ENCODE measurements at regions of chr22 and their contacts with region 1.

Region 1: GRCh38 chr22:31561238-31561887 is 65.0 kb downstream of the SFI1 start:
- DNase-seq: peak; percentile 60 to 89
- H3K4me3 ChIP-seq: no peak overlapping the region
- H3K27ac ChIP-seq: no peak overlapping the region
- H3K4me1 ChIP-seq: no peaks in the 10 kb centered on the region
- H3K27me3 ChIP-seq: no peaks in the 10 kb centered on the region
- CTCF ChIP-seq: peak; percentile 84 to 97 (median 96)
- EP300 ChIP-seq: no peak
- POLR2A ChIP-seq: no peak
- RAD21 ChIP-seq: peak; percentile 82 to 89

Region 2: DNA sequence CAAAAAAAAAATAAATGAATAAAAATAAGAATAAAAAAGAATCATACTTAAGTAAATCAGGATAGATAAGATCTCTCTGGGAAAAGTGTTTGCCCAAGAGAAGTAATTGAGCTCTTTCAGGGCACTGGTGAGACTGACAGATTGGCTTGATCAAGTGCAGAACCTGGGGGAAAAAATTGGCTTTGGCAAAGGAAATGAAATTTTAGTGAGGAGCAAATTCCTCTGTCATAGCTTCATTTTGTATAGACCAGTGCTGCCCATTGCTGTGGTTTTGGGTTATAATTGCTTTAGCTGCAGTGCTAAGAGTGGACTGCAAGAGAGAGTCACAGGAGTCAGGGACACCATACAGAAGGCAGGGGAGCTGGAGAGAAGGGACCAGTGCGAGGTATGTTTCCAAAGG is 29.3 kb before region 1 on chr22:
- CTCF ChIA-PET with region 1: interaction called, 13 read pairs
- POLR2A ChIA-PET with region 1: no interaction called
- DNase-seq: no peak
- H3K4me3 ChIP-seq: no peak overlapping the region
- H3K27ac ChIP-seq: no peak overlapping the region
- H3K4me1 ChIP-seq: no peaks in the 10 kb centered on the region
- H3K27me3 ChIP-seq: no peaks in the 10 kb centered on the region
- CTCF ChIP-seq: no peak
- EP300 ChIP-seq: no peak
- POLR2A ChIP-seq: no peak
- RAD21 ChIP-seq: no peak

Region 3: GRCh38 chr22:31544481-31545480 is 16.6 kb before region 1 on chr22:
- CTCF ChIA-PET with region 1: interaction called, 28 read pairs
- POLR2A ChIA-PET with region 1: interaction called, 3 read pairs
- DNase-seq: no peak
- H3K4me3 ChIP-seq: no peak overlapping the region
- H3K27ac ChIP-seq: no peak overlapping the region
- H3K4me1 ChIP-seq: no peaks in the 10 kb centered on the region
- H3K27me3 ChIP-seq: no peaks in the 10 kb centered on the region
- CTCF ChIP-seq: no peak
- EP300 ChIP-seq: no peak
- POLR2A ChIP-seq: no peak
- RAD21 ChIP-seq: no peak

Region 4: DNA sequence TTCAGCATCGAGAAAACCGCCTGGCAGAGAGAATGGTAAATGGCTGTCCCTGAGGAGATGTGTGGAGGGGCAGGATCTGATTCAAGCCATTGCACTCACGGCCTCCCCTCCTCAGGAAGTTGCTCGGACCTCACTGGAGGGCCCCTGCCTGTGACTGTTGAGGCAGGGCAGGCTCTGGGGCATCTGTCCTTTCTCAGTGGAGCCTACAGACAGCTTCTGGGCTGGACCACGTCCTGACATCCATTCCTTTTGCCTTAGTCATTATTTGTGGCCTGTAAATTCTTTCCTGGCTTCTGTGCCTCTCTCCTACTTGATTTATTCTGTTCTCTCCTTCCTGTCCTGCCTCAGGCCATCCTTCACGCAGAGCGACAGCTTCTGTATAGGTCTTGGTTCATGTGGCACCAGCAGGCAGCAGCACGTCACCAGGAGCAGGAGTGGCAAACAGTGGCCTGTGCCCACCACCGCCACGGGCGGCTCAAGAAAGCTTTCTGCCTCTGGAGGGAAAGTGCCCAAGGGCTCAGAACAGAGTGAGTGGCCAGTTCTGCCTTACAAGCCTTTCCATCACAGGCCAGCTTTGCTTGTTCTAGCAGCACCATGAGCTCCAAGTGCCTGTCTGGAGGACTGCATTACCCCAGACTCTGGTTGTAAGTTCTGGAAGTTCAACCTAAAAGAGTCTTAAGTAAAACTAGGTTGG is 41.0 kb after region 1 on chr22:
- CTCF ChIA-PET with region 1: interaction called, 19 read pairs
- POLR2A ChIA-PET with region 1: no interaction called
- DNase-seq: no peak
- H3K4me3 ChIP-seq: no peak overlapping the region
- H3K27ac ChIP-seq: no peak overlapping the region
- H3K4me1 ChIP-seq: no peaks in the 10 kb centered on the region
- H3K27me3 ChIP-seq: no peaks in the 10 kb centered on the region
- CTCF ChIP-seq: no peak
- EP300 ChIP-seq: no peak
- POLR2A ChIP-seq: no peak
- RAD21 ChIP-seq: no peak

Region 5: GRCh38 chr22:31630331-31631329 is 69.3 kb after region 1 on chr22:
- CTCF ChIA-PET with region 1: interaction called, 105 read pairs
- POLR2A ChIA-PET with region 1: interaction called, 3 read pairs
- DNase-seq: peak; percentile 53 to 88
- H3K4me3 ChIP-seq: peak overlapping the region; percentile 58 to 97 (median 60)
- H3K27ac ChIP-seq: no peak overlapping the region
- H3K4me1 ChIP-seq: peaks cover 5 to 31% (median 23%) of the 10 kb centered on the region in 4 experiments
- H3K27me3 ChIP-seq: no peaks in the 10 kb centered on the region
- CTCF ChIP-seq: no peak
- EP300 ChIP-seq: no peak
- POLR2A ChIP-seq: no peak; a peak in 1 of 3 replicates
- RAD21 ChIP-seq: no peak

Region 6: GRCh38 chr22:32185821-32186220 is 624.5 kb after region 1 on chr22:
- CTCF ChIA-PET with region 1: no interaction called
- POLR2A ChIA-PET with region 1: no interaction called
- DNase-seq: no peak
- H3K4me3 ChIP-seq: no peak overlapping the region
- H3K27ac ChIP-seq: no peak overlapping the region
- H3K4me1 ChIP-seq: peaks cover 0 to 3% (median 0%) of the 10 kb centered on the region in 4 experiments; a peak in 1 of 7 replicates
- H3K27me3 ChIP-seq: no peaks in the 10 kb centered on the region; a peak in 1 of 7 replicates
- CTCF ChIP-seq: no peak
- EP300 ChIP-seq: no peak
- POLR2A ChIP-seq: no peak
- RAD21 ChIP-seq: no peak

Measured in H1 (cell line).